CD4-positive, alpha-beta memory T cell (primary cell): ENCODE measurements at regions of chr6 and their contacts with region 1.

Region 1: DNA sequence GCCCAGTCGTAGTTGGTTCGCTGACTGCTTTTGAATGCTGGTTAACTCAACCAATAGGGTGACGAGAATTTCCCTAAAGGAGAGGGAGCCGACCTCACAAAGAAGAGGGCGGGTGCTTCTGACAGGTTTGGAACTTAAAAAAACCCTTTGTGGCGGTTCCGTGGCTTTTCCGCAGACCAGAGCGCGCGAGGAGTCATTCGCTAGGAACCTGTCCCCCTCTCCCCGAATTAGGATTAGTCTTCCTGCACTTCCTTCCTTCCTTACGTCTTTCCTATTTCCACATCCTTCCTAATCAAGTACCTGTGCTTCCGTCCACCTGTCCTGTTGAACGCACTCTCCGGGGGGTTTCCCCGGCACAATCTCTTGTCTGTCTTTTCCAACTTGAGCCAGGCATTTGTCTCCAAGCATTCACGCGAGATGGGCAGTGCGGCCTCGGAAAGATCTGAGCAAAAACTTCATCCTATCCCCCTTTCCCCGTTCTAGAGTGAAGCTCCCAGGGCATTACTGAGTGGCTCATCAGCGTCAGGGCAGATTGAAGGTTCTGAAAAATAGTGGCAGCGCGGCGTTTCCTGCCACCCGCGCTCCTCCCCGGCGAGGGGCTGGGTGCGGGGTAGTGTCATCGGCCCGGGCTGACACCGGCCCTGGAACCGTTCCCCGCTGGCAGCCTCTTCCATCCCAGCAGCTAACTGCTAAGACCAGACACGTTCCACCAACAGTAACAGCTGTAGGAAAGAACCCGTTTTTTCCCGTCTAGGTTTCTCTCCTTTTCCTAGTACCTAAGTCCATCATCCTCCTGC is 1.5 kb upstream of the STXBP5 start:
- DNase-seq: peak; percentile 87 to 94 (median 91)
- H3K4me3 ChIP-seq: peak overlapping the region; percentile 66 to 98
- H3K4me3 Mint-ChIP-seq: peak overlapping the region; percentile 88 to 99 (median 96)
- H3K27ac ChIP-seq: peak overlapping the region; percentile 95
- H3K27ac Mint-ChIP-seq: peak overlapping the region; percentile 93 to 99 (median 98)
- H3K4me1 ChIP-seq: peaks cover 28% of the 10 kb centered on the region
- H3K4me1 Mint-ChIP-seq: peaks cover 16 to 46% (median 27%) of the 10 kb centered on the region in 4 donors
- H3K27me3 ChIP-seq: no peaks in the 10 kb centered on the region
- H3K27me3 Mint-ChIP-seq: no peaks in the 10 kb centered on the region

Region 2: GRCh38 chr6:145963216-145964068 is 1239.3 kb before region 1 on chr6:
- CTCF ChIA-PET with region 1: no interaction called
- POLR2A ChIA-PET with region 1: interaction called, 4 read pairs
- intact Hi-C with region 1: loop called (anchors 5 kb)
- DNase-seq: peak in 3 of 5 donors; percentile 23 to 46 (median 38)
- H3K4me3 ChIP-seq: peak overlapping the region; percentile 76 to 95
- H3K4me3 Mint-ChIP-seq: peak overlapping the region; percentile 96 to 99 (median 98)
- H3K27ac ChIP-seq: peak overlapping the region; percentile 67
- H3K27ac Mint-ChIP-seq: peak overlapping the region; percentile 92 to 99 (median 99)
- H3K4me1 ChIP-seq: peaks cover 43% of the 10 kb centered on the region
- H3K4me1 Mint-ChIP-seq: peaks cover 30 to 67% (median 47%) of the 10 kb centered on the region in 4 donors
- H3K27me3 ChIP-seq: no peaks in the 10 kb centered on the region
- H3K27me3 Mint-ChIP-seq: no peaks in the 10 kb centered on the region

Region 3: DNA sequence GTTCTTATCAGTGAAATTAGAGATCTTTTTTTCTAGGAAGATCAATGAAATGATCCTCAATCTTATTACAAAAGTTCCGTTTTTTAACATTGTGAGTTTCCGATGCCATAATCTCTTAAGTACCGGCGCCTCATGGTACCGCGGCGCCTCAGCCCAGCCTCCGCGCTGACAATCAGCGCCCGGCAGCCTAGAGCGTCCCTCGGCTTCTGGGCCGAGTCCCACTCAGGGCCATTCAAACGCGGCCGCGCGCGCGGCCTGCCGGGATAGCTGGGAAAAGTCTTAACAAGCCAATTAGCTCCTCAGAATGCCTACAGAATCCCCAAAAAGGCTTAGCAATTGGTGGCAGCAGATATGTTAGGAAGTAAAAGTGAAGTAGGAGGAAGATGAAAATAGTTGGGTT is 399.1 kb before region 1 on chr6:
- CTCF ChIA-PET with region 1: no interaction called
- POLR2A ChIA-PET with region 1: no interaction called
- intact Hi-C with region 1: no loop called
- DNase-seq: no peak
- H3K4me3 ChIP-seq: no peak overlapping the region
- H3K4me3 Mint-ChIP-seq: no peak overlapping the region
- H3K27ac ChIP-seq: no peak overlapping the region
- H3K27ac Mint-ChIP-seq: no peak overlapping the region
- H3K4me1 ChIP-seq: no peaks in the 10 kb centered on the region
- H3K4me1 Mint-ChIP-seq: no peaks in the 10 kb centered on the region
- H3K27me3 ChIP-seq: no peaks in the 10 kb centered on the region
- H3K27me3 Mint-ChIP-seq: no peaks in the 10 kb centered on the region

Region 4: GRCh38 chr6:146857180-146857979 is 345.3 kb before region 1 on chr6:
- CTCF ChIA-PET with region 1: no interaction called
- POLR2A ChIA-PET with region 1: no interaction called
- intact Hi-C with region 1: loop called (anchors 5 kb)
- DNase-seq: peak; percentile 51 to 72 (median 64)
- H3K4me3 ChIP-seq: peak overlapping the region in 1 of 2 donors; percentile 46
- H3K4me3 Mint-ChIP-seq: peak overlapping the region in 6 of 8 donors; percentile 7 to 68 (median 42)
- H3K27ac ChIP-seq: no peak overlapping the region
- H3K27ac Mint-ChIP-seq: peak overlapping the region in 2 of 7 donors; percentile 21 to 58
- H3K4me1 ChIP-seq: peaks cover 5% of the 10 kb centered on the region
- H3K4me1 Mint-ChIP-seq: peaks cover 0 to 3% (median under 1%) of the 10 kb centered on the region in 4 donors
- H3K27me3 ChIP-seq: no peaks in the 10 kb centered on the region
- H3K27me3 Mint-ChIP-seq: peaks cover 2% of the 10 kb centered on the region in 2 donors

Region 5: DNA sequence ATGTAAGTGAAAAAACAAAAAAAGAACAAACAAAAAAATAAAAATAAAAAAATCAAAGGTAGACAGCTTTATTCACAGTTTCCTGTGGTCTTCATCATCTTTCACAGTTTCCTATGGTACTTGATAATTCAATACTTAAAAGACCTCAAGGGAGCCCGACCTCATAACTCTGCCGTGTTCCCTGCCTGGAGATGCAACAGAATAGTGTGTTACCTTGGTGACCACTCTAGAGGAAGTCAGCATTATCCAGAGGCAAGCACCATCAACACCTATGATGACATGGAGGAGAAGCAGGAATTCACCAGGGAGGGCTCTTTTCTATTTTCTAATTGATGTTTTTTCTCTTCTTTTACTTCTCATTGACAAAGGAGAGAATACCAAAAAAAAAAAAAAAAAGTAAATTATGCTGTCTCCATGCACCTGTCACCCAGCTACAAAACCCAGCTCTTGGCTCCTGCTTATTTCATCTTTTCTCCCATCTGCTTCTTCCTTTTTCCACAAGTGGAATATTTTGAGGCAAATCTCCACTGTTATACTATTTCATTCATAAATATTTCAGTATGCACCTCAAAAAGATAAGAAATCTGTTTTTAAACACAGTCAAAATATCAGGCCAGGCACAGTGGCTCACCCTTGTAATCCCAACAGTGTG is 94.3 kb before region 1 on chr6:
- CTCF ChIA-PET with region 1: no interaction called
- POLR2A ChIA-PET with region 1: interaction called, 20 read pairs
- intact Hi-C with region 1: loop called (anchors 1 kb)
- DNase-seq: no peak
- H3K4me3 ChIP-seq: no peak overlapping the region
- H3K4me3 Mint-ChIP-seq: peak overlapping the region in 3 of 8 donors; percentile 26 to 75 (median 54)
- H3K27ac ChIP-seq: no peak overlapping the region
- H3K27ac Mint-ChIP-seq: peak overlapping the region in 2 of 7 donors; percentile 36 to 59
- H3K4me1 ChIP-seq: peaks cover 40% of the 10 kb centered on the region
- H3K4me1 Mint-ChIP-seq: peaks cover 35 to 59% (median 44%) of the 10 kb centered on the region in 4 donors
- H3K27me3 ChIP-seq: no peaks in the 10 kb centered on the region
- H3K27me3 Mint-ChIP-seq: no peaks in the 10 kb centered on the region

Region 6: DNA sequence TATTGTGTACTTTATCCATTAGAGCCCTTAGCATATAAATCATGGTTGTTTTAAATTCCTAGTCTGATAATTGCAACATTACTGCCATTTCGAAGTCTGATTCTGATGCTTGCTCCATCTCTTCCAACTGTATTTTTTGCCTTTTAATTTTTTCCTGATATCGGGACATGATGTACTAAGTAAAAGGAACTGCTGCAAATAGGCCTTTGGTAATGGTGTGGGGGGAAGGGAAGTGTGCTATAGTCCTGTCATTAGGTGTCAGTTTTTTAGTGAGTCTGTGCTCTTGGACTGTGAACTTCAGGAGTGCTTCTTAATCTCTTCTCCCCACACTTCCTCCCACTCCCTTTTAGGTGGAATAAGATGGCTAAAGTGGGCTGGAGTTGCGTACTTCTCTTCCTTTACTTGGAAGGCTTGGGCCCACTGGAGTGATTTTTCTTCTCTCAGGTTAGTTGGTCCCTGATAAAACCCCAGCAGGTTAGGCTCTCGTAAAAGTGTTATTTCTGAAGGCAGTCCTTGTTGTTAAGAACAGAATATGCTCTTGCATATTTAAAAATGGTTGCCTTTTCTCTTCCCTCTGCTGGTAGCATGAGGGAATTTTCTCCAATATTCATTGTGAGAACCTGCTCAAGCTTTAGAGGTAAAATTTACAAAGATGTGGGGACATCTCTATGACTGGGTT is 19.6 kb after region 1 on chr6:
- CTCF ChIA-PET with region 1: no interaction called
- POLR2A ChIA-PET with region 1: interaction called, 5 read pairs
- intact Hi-C with region 1: loop called (anchors 1 kb)
- DNase-seq: peak in 4 of 5 donors; percentile 12 to 29 (median 16)
- H3K4me3 ChIP-seq: no peak overlapping the region
- H3K4me3 Mint-ChIP-seq: no peak overlapping the region
- H3K27ac ChIP-seq: no peak overlapping the region
- H3K27ac Mint-ChIP-seq: peak overlapping the region in 2 of 7 donors; percentile 12 to 82
- H3K4me1 ChIP-seq: peaks cover 12% of the 10 kb centered on the region
- H3K4me1 Mint-ChIP-seq: peaks cover 30 to 52% (median 42%) of the 10 kb centered on the region in 4 donors
- H3K27me3 ChIP-seq: no peaks in the 10 kb centered on the region
- H3K27me3 Mint-ChIP-seq: no peaks in the 10 kb centered on the region

Region 7: GRCh38 chr6:147285087-147285855 is 82.6 kb after region 1 on chr6:
- CTCF ChIA-PET with region 1: no interaction called
- POLR2A ChIA-PET with region 1: no interaction called
- intact Hi-C with region 1: loop called (anchors 5 kb)
- DNase-seq: peak in 4 of 5 donors; percentile 14 to 29 (median 24)
- H3K4me3 ChIP-seq: no peak overlapping the region
- H3K4me3 Mint-ChIP-seq: peak overlapping the region in 3 of 8 donors; percentile 6 to 27 (median 7)
- H3K27ac ChIP-seq: no peak overlapping the region
- H3K27ac Mint-ChIP-seq: peak overlapping the region in 2 of 7 donors; percentile 61 to 64
- H3K4me1 ChIP-seq: peaks cover 8% of the 10 kb centered on the region
- H3K4me1 Mint-ChIP-seq: peaks cover 12 to 28% (median 15%) of the 10 kb centered on the region in 4 donors
- H3K27me3 ChIP-seq: no peaks in the 10 kb centered on the region
- H3K27me3 Mint-ChIP-seq: no peaks in the 10 kb centered on the region